ENCODE measurements at regions of chrX and their contacts with region 1.

Region 1: GRCh38 chrX:41288641-41289040 is 45.3 kb upstream of the DDX3X start:
- DNase-seq: no peak
- H3K4me3 ChIP-seq: no peak overlapping the region
- H3K27ac ChIP-seq: no peak overlapping the region
- H3K4me1 ChIP-seq: peaks cover 10% of the 10 kb centered on the region
- H3K27me3 ChIP-seq: no peaks in the 10 kb centered on the region
- CTCF ChIP-seq: no peak

Region 2: DNA sequence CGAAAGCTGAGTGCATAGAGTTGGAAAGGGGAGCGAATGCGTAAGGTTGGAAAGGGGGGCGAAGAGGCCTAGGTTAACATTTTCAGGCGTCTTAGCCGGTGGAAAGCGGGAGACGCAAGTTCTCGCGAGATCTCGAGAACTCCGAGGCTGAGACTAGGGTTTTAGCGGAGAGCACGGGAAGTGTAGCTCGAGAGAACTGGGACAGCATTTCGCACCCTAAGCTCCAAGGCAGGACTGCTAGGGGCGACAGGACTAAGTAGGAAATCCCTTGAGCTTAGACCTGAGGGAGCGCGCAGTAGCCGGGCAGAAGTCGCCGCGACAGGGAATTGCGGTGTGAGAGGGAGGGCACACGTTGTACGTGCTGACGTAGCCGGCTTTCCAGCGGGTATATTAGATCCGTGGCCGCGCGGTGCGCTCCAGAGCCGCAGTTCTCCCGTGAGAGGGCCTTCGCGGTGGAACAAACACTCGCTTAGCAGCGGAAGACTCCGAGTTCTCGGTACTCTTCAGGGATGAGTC is 45.2 kb after region 1 on chrX and contains the start of gene DDX3X:
- CTCF ChIA-PET with region 1: no interaction called
- POLR2A ChIA-PET with region 1: interaction called, 15 read pairs
- intact Hi-C with region 1: no loop called
- DNase-seq: peak; percentile 93
- H3K4me3 ChIP-seq: peak within 1 kb of the TSS; percentile 81
- H3K27ac ChIP-seq: peak within 1 kb of the TSS; percentile 100
- H3K4me1 ChIP-seq: peaks cover 47% of the 10 kb centered on the region
- H3K27me3 ChIP-seq: no peaks in the 10 kb centered on the region
- CTCF ChIP-seq: 0 out of 2 replicates have a peak, but pooled peaks have one; percentile 20
- total RNA-seq, gene DDX3X: 408 and 454 TPM in 2 replicates

Measured in A673 (cell line).